Right cardiac atrium (tissue), 5 donors: ENCODE measurements at regions of chr7 and their contacts with region 1.

Region 1: DNA sequence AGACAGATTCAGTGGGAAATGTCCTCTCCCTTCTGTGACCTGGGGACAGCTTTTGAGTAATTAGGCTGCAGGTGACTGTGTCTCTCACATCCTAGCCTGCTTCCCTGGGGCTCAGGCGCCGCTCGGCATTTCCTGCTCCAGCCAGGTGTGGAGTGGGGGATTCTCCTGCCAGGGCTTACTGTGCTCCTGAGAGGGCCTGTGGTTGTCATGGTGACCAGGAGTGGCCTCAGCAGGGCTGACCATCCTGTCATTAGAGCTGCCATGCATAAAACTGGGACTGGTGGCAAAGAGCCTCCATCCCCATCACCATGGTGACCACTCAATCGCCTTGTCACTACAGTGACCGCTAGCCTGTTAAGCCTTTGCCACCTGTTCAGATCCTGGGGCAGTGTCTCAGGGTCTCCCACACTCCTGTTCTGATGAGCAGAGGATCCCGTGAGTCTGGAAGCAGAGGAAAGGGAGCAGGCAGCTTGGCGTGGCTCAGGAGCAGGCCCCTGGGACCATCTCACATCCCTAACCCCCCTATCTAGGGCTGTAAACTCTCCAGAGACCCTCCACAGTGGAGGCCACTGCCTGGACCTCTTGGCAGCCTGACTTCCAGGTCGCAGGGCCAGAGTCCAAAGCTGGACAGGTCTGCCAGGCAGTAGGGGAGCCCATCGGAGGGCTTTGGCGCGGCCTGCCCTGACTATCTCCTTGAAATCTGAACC is at the start of gene GCK:
- DNase-seq: no peak
- ATAC-seq: no peak
- H3K4me3 ChIP-seq: no peak within 1 kb of the TSS
- H3K27ac ChIP-seq: no peak within 1 kb of the TSS
- H3K4me1 ChIP-seq: no peaks in the 10 kb centered on the region
- H3K27me3 ChIP-seq: no peaks in the 10 kb centered on the region
- total RNA-seq, gene GCK: 7.4 to 12.9 (median 11.6) TPM

Region 2: DNA sequence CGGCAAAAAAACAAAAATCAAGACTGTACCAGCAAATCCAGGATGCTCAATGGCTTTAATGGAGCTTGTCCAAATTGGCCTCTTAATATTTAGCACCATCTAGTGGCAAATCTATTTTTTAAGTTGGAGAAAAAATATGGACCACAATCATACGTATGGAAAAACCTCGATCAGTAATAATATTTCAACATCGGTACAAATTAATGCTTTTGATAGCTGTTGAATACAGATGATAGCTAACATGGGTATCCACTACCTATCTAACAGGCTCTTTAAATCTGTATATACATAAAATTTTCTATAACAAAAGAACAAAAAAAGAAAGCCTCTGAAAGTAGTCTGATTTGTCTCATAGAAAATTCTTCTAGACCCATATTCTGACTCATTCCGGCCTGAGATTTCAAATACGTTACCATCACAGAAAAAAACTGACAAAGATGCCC is 489.4 kb before region 1 on chr7:
- intact Hi-C with region 1: no loop called
- DNase-seq: no peak
- ATAC-seq: peak in 1 of 2 donors; percentile 69
- H3K4me3 ChIP-seq: no peak overlapping the region
- H3K27ac ChIP-seq: no peak overlapping the region
- H3K4me1 ChIP-seq: no peaks in the 10 kb centered on the region
- H3K27me3 ChIP-seq: no peaks in the 10 kb centered on the region

Region 3: GRCh38 chr7:44046451-44047061 is 142.9 kb before region 1 on chr7:
- intact Hi-C with region 1: no loop called
- DNase-seq: no peak
- ATAC-seq: no peak
- H3K4me3 ChIP-seq: no peak overlapping the region
- H3K27ac ChIP-seq: no peak overlapping the region
- H3K4me1 ChIP-seq: peaks cover 4% of the 10 kb centered on the region
- H3K27me3 ChIP-seq: no peaks in the 10 kb centered on the region

Region 4: DNA sequence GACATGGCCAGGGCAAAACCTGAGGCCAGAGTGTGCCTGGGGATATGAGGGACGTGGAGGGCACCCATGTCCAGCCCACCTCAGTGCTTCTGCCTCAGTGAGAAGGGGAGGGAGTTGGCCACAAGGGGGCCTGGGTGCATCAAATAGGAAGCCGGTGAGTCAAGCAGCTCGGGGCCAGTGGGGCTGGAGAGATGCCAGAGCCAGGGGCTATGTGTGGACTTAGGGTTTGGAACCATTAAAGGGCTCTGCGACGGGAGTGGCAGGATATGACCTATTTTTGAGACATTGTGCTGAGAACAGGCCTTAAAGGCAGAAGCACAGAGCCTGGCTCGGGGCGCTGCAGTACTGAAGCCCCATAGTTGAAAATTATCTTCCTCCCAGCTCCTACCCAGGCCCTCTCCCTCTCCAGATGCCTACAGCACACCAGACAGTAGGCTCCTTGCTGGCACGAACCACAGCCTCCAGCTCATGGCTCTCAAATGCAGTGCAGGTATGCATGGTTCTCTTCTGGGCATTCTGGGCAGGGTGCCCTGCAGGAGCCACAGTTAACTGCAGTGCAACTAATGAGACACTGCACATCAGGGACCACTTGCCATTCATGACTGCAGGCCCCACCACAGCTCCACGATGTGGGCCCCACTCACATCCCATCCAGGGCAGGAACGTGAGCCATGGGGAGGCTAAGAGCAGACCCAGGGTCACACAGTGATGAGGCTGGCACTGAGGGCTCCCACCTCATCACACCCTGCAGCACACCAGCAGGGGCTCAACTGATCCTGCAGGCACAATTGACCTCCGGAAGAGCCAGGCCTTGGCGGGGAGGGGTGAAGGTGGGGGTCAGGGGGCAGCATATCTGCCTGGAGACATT is 116.8 kb before region 1 on chr7:
- intact Hi-C with region 1: loop called in 3 of 4 experiments (anchors 5 to 10 kb)
- DNase-seq: peak; percentile 91 to 94 (median 94)
- ATAC-seq: peak; percentile 39 to 75
- H3K4me3 ChIP-seq: no peak overlapping the region
- H3K27ac ChIP-seq: peak overlapping the region; percentile 28
- H3K4me1 ChIP-seq: peaks cover 3% of the 10 kb centered on the region
- H3K27me3 ChIP-seq: no peaks in the 10 kb centered on the region

Region 5: DNA sequence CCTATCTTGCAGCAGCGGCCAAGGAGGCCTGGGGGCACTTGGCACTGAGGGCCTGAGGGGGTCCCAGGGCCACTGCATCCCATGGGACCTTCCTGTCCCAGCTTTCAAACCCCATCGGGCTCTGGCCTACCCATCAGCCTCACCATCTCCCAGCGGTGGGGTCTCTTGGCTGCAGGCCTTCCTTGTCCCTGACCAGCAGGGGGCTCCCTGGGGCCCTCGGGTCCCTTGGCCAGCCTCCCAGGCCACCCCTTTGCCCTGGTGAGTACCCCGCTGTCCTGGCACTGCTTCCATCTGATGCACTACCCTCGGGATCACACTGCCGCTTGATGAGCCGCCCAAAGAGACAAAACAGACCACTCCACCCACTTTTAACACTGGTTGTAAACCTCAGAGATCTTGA is 54.8 kb after region 1 on chr7:
- intact Hi-C with region 1: no loop called
- DNase-seq: peak in 1 of 3 donors; percentile 66
- ATAC-seq: no peak
- H3K4me3 ChIP-seq: no peak overlapping the region
- H3K27ac ChIP-seq: no peak overlapping the region
- H3K4me1 ChIP-seq: no peaks in the 10 kb centered on the region
- H3K27me3 ChIP-seq: no peaks in the 10 kb centered on the region

Region 6: GRCh38 chr7:44348300-44348699 is 158.9 kb after region 1 on chr7:
- intact Hi-C with region 1: no loop called
- DNase-seq: no peak
- ATAC-seq: peak; percentile 36 to 37
- H3K4me3 ChIP-seq: no peak overlapping the region
- H3K27ac ChIP-seq: no peak overlapping the region
- H3K4me1 ChIP-seq: peaks cover 4% of the 10 kb centered on the region
- H3K27me3 ChIP-seq: no peaks in the 10 kb centered on the region